Calu3 (cell line): ENCODE measurements at regions of chr7 and their contacts with region 1.

Region 1: GRCh38 chr7:117715784-117716445 is 157.3 kb downstream of the CTTNBP2 start:
- DNase-seq: peak; percentile 70
- H3K4me3 Mint-ChIP-seq: peak overlapping the region; percentile 53
- H3K27ac Mint-ChIP-seq: peak overlapping the region; percentile 90
- H3K4me1 Mint-ChIP-seq: peaks cover 48% of the 10 kb centered on the region
- H3K27me3 Mint-ChIP-seq: no peaks in the 10 kb centered on the region
- CTCF ChIP-seq: peak; percentile 74

Region 2: DNA sequence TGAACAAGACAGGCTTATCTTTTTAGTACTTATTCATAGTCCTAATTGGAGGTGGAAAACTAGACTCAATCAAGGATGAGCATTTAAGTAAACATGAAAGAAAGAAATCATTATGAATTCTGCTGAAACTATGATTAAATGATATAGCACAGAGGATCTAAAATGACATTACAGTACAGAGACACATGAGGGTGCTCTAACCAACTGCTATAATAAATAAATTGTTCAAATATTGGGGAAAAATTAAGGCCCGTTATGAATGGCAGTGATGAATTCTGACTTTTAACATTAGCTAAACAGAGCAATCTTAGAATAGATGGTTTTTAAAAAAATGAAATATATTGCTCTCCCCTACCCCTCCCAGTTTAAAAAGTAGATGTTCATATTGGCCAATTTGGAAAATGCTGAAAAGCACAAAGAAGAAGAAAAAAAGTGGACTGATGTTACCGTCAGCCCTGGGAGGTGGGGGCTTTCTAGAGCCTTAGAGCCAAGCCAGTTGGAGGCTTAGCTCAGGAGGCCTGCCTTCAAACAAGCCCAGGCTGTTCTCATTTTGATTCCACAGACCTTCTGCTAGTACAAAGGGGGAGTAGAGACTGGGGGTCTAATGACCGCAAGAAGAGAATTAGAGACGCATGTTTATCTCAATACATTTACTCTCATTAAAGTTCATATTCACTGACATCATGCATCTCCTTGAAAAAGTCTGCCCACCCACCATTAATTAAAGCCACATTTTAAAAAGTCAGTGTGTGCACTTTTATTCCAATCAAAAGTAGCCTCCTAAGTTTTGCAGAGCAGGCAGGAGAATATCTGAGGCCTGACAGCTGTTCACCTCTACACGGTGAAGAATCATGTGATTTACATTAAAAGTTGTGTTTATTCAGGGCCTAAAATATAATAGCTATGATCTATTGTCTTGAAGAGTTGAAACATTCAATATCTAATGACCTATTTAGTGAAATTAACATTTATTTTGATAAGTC is 403.0 kb before region 1 on chr7:
- CTCF ChIA-PET with region 1: no interaction called
- intact Hi-C with region 1: loop called (anchors 10 kb)
- DNase-seq: no peak
- H3K4me3 Mint-ChIP-seq: no peak overlapping the region
- H3K27ac Mint-ChIP-seq: no peak overlapping the region
- H3K4me1 Mint-ChIP-seq: no peaks in the 10 kb centered on the region
- H3K27me3 Mint-ChIP-seq: no peaks in the 10 kb centered on the region
- CTCF ChIP-seq: peak; percentile 27

Region 3: GRCh38 chr7:117399820-117400422 is 316.0 kb before region 1 on chr7:
- CTCF ChIA-PET with region 1: no interaction called
- intact Hi-C with region 1: loop called (anchors 5 kb)
- DNase-seq: no peak
- H3K4me3 Mint-ChIP-seq: no peak overlapping the region
- H3K27ac Mint-ChIP-seq: peak overlapping the region; percentile 93
- H3K4me1 Mint-ChIP-seq: peaks cover 56% of the 10 kb centered on the region
- H3K27me3 Mint-ChIP-seq: no peaks in the 10 kb centered on the region
- CTCF ChIP-seq: peak; percentile 29

Region 4: DNA sequence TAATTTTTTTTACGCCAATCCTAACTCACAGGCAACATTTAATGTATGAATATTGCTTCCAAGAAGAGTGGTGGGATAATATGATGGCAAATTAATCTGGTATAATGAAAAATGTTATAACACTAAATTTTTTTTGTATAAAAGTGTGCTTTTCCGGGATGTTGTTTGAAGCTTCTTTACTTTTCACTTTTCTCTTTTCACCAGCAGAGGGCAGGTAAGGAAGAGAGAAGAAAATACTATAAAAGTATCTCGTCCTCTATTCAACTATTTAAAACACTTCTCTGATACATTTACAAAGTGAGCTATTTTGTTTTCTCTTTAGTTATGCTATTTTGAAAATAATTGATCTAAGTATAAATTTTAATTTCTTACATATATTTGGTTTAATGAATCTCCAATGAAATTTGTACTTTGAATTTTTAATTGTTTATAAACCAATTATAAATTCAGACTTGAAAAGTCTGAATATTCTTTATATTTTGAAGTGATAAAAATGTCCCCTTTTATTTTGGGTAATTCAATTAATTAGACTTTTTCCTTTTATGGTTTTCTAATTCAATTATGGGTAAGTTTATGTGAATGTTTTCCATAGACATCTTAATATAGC is 256.8 kb before region 1 on chr7:
- CTCF ChIA-PET with region 1: no interaction called
- intact Hi-C with region 1: loop called (anchors 5 kb)
- DNase-seq: no peak
- H3K4me3 Mint-ChIP-seq: no peak overlapping the region
- H3K27ac Mint-ChIP-seq: no peak overlapping the region
- H3K4me1 Mint-ChIP-seq: peaks cover 7% of the 10 kb centered on the region
- H3K27me3 Mint-ChIP-seq: no peaks in the 10 kb centered on the region
- CTCF ChIP-seq: peak; percentile 37

Region 5: DNA sequence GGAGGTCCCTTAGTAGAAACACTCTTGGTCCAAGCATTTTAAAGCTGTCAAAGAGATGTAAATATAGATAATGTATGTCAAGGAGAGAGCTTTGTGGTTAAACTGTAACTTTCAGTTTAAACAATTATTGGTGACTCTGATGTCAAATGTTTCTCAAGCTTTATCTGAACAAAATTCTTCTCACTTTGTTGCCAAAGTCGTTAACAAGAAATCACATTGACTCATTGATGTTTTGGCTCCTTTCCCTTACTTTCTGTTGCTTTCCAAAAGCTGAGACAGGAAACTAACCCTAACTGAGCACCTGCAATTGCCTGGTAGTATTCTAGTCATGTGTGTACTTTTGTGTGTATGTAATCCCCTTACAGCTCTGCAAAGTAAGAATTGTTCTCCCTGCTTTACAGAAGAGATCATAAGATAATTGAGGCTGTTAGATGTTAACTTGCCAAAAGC is 127.5 kb before region 1 on chr7:
- CTCF ChIA-PET with region 1: no interaction called
- intact Hi-C with region 1: loop called (anchors 5 kb)
- DNase-seq: no peak
- H3K4me3 Mint-ChIP-seq: no peak overlapping the region
- H3K27ac Mint-ChIP-seq: no peak overlapping the region
- H3K4me1 Mint-ChIP-seq: peaks cover 62% of the 10 kb centered on the region
- H3K27me3 Mint-ChIP-seq: no peaks in the 10 kb centered on the region
- CTCF ChIP-seq: no peak

Region 6: GRCh38 chr7:117673839-117674238 is 42.1 kb before region 1 on chr7:
- CTCF ChIA-PET with region 1: interaction called, 15 read pairs
- intact Hi-C with region 1: loop called (anchors 1 kb)
- DNase-seq: no peak
- H3K4me3 Mint-ChIP-seq: no peak overlapping the region
- H3K27ac Mint-ChIP-seq: peak overlapping the region; percentile 30
- H3K4me1 Mint-ChIP-seq: peaks cover 37% of the 10 kb centered on the region
- H3K27me3 Mint-ChIP-seq: no peaks in the 10 kb centered on the region
- CTCF ChIP-seq: no peak